Heart right ventricle (tissue), 16 donors: ENCODE measurements at regions of chr5 and their contacts with region 1.

Region 1: DNA sequence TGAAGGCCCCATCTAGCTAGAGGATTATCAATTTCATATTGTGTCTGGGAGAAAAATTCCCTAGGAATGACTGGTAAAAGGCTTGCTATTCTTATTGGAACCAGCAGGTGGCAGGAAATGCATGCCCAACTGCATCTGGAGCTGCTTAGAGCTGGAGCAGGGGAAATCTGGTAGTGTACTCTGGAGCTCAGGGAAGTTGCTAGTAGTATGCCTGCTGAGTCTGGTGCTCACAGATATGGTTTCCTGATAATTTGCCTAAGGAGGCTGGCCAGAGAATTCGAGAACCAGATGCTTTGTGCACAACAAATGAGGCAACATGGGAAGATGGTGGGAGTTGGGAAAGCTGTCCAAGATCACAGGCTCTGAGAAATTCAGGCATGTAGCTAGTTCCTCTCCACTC is 53.7 kb downstream of the G3BP1 start:
- DNase-seq: peak in 1 of 2 donors; percentile 70
- ATAC-seq: peak; percentile 83 to 95 (median 91)
- H3K4me3 ChIP-seq: no peak overlapping the region
- H3K27ac ChIP-seq: no peak overlapping the region
- H3K4me1 ChIP-seq: peaks cover 0 to 21% (median 2%) of the 10 kb centered on the region in 9 donors
- H3K27me3 ChIP-seq: no peaks in the 10 kb centered on the region
- CTCF ChIP-seq: peak; percentile 71 to 93 (median 89)

Region 2: GRCh38 chr5:151357801-151358200 is 467.6 kb before region 1 on chr5:
- intact Hi-C with region 1: no loop called
- DNase-seq: no peak
- ATAC-seq: no peak
- H3K4me3 ChIP-seq: no peak overlapping the region
- H3K27ac ChIP-seq: no peak overlapping the region
- H3K4me1 ChIP-seq: no peaks in the 10 kb centered on the region
- H3K27me3 ChIP-seq: no peaks in the 10 kb centered on the region
- CTCF ChIP-seq: no peak

Region 3: GRCh38 chr5:152264645-152265254 is 439.3 kb after region 1 on chr5:
- intact Hi-C with region 1: loop called in 1 of 10 experiments (anchors 5 kb)
- DNase-seq: no peak
- ATAC-seq: no peak
- H3K4me3 ChIP-seq: no peak overlapping the region
- H3K27ac ChIP-seq: no peak overlapping the region
- H3K4me1 ChIP-seq: peaks cover 0 to 13% (median 3%) of the 10 kb centered on the region in 9 donors
- H3K27me3 ChIP-seq: no peaks in the 10 kb centered on the region
- CTCF ChIP-seq: no peak

Region 4: DNA sequence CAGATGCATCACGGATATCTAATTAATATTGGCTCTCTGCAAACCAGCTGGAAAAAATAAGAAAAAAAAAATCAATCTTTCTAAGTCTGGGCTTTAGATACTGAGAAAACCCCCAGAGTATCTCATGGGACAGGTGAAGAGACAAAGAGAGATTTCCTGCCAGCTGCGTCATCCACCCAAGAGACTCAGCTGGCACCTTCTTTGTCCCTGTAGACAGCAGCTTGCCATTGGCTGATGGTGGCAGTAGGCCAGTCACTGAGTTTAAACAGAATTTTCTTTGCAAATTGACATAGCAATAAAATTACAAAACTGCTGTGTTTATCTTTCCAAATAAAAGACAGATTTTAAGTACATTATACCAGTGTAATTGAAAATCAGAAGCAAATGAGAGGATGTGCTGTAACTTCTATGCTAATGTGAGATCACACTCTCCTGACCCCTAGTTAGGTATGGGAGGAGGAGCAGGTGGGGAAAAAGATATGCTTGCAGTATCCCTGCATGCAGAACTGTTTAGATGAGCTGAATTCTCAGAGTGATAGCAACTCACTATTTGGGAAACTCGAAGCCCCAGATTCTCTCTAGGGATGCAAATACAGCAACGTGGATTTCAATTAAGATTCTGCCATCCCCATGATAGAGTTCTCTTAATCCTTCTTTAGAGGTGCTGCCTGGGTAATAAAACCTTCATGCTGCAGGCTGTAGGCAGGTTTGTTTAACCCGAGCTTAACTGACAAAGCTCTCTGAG is 507.4 kb after region 1 on chr5:
- intact Hi-C with region 1: loop called in 1 of 10 experiments (anchors 10 kb)
- DNase-seq: no peak
- ATAC-seq: no peak
- H3K4me3 ChIP-seq: no peak overlapping the region
- H3K27ac ChIP-seq: no peak overlapping the region
- H3K4me1 ChIP-seq: peaks cover 0 to 9% (median 0%) of the 10 kb centered on the region in 9 donors
- H3K27me3 ChIP-seq: no peaks in the 10 kb centered on the region
- CTCF ChIP-seq: no peak

Region 5: DNA sequence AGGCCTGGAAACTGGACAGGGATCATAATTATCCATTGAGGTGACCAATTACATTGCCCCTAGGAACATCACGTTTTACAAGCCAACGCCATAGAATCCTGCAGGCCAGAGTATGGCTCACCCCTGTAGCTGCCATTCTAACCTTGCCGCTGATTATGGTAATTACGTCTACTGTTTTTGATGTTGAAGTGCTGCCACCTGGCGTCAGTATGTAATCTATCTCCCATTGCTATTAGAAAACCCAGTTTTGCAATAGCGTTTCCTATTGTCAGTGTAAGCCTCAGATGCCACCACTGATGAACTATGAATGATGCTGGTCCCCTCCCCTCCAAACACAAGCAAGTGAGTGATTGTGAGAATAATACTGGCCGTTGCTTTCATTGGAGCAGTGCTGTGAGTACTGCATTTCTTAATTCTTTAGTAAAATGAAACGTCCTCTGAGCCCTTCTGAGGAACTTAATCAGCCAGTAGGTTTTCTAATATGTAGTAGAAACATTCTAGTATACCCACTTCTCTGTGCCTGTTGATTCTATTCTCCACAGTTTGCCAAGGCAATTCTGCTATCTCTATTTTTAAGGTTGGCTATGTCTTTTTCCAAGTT is 680.1 kb after region 1 on chr5:
- intact Hi-C with region 1: loop called in 9 of 10 experiments (anchors 1 to 10 kb)
- DNase-seq: peak in 1 of 2 donors; percentile 41
- ATAC-seq: peak; percentile 58 to 86 (median 71)
- H3K4me3 ChIP-seq: no peak overlapping the region
- H3K27ac ChIP-seq: no peak overlapping the region
- H3K4me1 ChIP-seq: no peaks in the 10 kb centered on the region
- H3K27me3 ChIP-seq: peaks cover 0 to 7% (median 0%) of the 10 kb centered on the region in 7 donors
- CTCF ChIP-seq: peak in 8 of 9 donors; percentile 44 to 72 (median 64)